ENCODE measurements at regions of chr19 and their contacts with region 1.

Region 1: GRCh38 chr19:49937750-49938381 is 8.6 kb upstream of the NUP62 start:
- DNase-seq: peak; percentile 24
- H3K4me3 ChIP-seq: peak overlapping the region; percentile 41
- H3K27ac ChIP-seq: no peak overlapping the region
- H3K27me3 ChIP-seq: peaks cover 2% of the 10 kb centered on the region
- CTCF ChIP-seq: peak; percentile 98

Region 2: GRCh38 chr19:49954079-49954829 is 16.4 kb after region 1 on chr19:
- CTCF ChIA-PET with region 1: interaction called, 25 read pairs
- POLR2A ChIA-PET with region 1: no interaction called
- DNase-seq: no peak
- H3K4me3 ChIP-seq: no peak overlapping the region
- H3K27ac ChIP-seq: no peak overlapping the region
- H3K27me3 ChIP-seq: peaks cover 33% of the 10 kb centered on the region
- CTCF ChIP-seq: no peak

Region 3: DNA sequence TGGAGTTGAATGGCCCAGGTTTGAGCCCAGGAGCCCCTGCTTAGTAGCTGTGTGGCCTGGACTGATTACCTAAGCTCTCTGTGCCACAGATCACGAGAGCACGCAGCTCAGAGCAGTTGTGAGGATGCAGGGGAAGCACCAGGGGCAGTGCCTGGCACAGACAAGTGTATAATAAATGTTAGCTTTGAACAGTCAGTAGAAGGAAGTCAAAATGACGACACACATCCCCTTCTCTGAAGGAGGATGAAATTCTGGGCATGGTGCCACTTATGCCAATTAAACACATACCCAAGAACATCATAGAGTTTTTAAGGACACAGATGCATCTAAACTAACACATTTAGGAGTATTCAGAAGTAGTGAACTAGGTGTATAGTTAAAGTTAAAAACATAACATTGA is 48.0 kb after region 1 on chr19:
- CTCF ChIA-PET with region 1: interaction called, 11 read pairs
- POLR2A ChIA-PET with region 1: interaction called, 4 read pairs
- DNase-seq: no peak
- H3K4me3 ChIP-seq: no peak overlapping the region
- H3K27ac ChIP-seq: no peak overlapping the region
- H3K27me3 ChIP-seq: no peaks in the 10 kb centered on the region
- CTCF ChIP-seq: no peak